ENCODE measurements at regions of chr13 and their contacts with region 1.

Region 1: GRCh38 chr13:99087096-99087953 is 109.5 kb upstream of the DOCK9 start:
- DNase-seq: peak; percentile 83 to 95 (median 92)
- ATAC-seq: peak; percentile 85
- H3K4me3 ChIP-seq: peak overlapping the region; percentile 97
- H3K4me3 Mint-ChIP-seq: peak overlapping the region; percentile 92 to 100 (median 98)
- H3K27ac ChIP-seq: peak overlapping the region; percentile 95
- H3K27ac Mint-ChIP-seq: peak overlapping the region; percentile 96 to 99 (median 98)
- H3K4me1 ChIP-seq: peaks cover 29 to 31% of the 10 kb centered on the region in 2 donors
- H3K4me1 Mint-ChIP-seq: peaks cover 26 to 53% (median 42%) of the 10 kb centered on the region in 7 donors
- H3K27me3 ChIP-seq: no peaks in the 10 kb centered on the region
- H3K27me3 Mint-ChIP-seq: peaks cover 0 to 5% (median 3%) of the 10 kb centered on the region in 5 donors

Region 2: GRCh38 chr13:97975848-97976609 is 1111.3 kb before region 1 on chr13:
- CTCF ChIA-PET with region 1: no interaction called
- POLR2A ChIA-PET with region 1: no interaction called
- intact Hi-C with region 1: loop called in 1 of 2 experiments (anchors 2 kb)
- DNase-seq: peak; percentile 53 to 94 (median 88)
- ATAC-seq: peak; percentile 97
- H3K4me3 ChIP-seq: peak overlapping the region; percentile 69
- H3K4me3 Mint-ChIP-seq: peak overlapping the region; percentile 88 to 100 (median 96)
- H3K27ac ChIP-seq: peak overlapping the region; percentile 88
- H3K27ac Mint-ChIP-seq: peak overlapping the region; percentile 90 to 98 (median 96)
- H3K4me1 ChIP-seq: peaks cover 12 to 15% of the 10 kb centered on the region in 2 donors
- H3K4me1 Mint-ChIP-seq: peaks cover 17 to 44% (median 38%) of the 10 kb centered on the region in 7 donors
- H3K27me3 ChIP-seq: no peaks in the 10 kb centered on the region
- H3K27me3 Mint-ChIP-seq: peaks cover 0 to 5% (median 0%) of the 10 kb centered on the region in 5 donors

Region 3: GRCh38 chr13:98997738-98998641 is 89.3 kb before region 1 on chr13:
- CTCF ChIA-PET with region 1: no interaction called
- POLR2A ChIA-PET with region 1: interaction called, 5 read pairs
- intact Hi-C with region 1: loop called in 1 of 2 experiments (anchors 2 kb)
- DNase-seq: no peak
- ATAC-seq: no peak
- H3K4me3 ChIP-seq: no peak overlapping the region
- H3K4me3 Mint-ChIP-seq: peak overlapping the region; percentile 46 to 84 (median 72)
- H3K27ac ChIP-seq: peak overlapping the region; percentile 90
- H3K27ac Mint-ChIP-seq: peak overlapping the region; percentile 44 to 99 (median 96)
- H3K4me1 ChIP-seq: peaks cover 33 to 89% of the 10 kb centered on the region in 2 donors
- H3K4me1 Mint-ChIP-seq: peaks cover 60 to 100% (median 99%) of the 10 kb centered on the region in 7 donors
- H3K27me3 ChIP-seq: no peaks in the 10 kb centered on the region
- H3K27me3 Mint-ChIP-seq: no peaks in the 10 kb centered on the region

Region 4: GRCh38 chr13:99067160-99067985 is 20.0 kb before region 1 on chr13:
- CTCF ChIA-PET with region 1: interaction called, 7 read pairs
- POLR2A ChIA-PET with region 1: interaction called, 28 read pairs
- intact Hi-C with region 1: loop called (anchors 2 kb)
- DNase-seq: no peak
- ATAC-seq: no peak
- H3K4me3 ChIP-seq: no peak overlapping the region
- H3K4me3 Mint-ChIP-seq: peak overlapping the region; percentile 33 to 81 (median 56)
- H3K27ac ChIP-seq: no peak overlapping the region
- H3K27ac Mint-ChIP-seq: peak overlapping the region; percentile 46 to 89 (median 76)
- H3K4me1 ChIP-seq: peaks cover 14 to 46% of the 10 kb centered on the region in 2 donors
- H3K4me1 Mint-ChIP-seq: peaks cover 44 to 98% (median 88%) of the 10 kb centered on the region in 7 donors
- H3K27me3 ChIP-seq: no peaks in the 10 kb centered on the region
- H3K27me3 Mint-ChIP-seq: peaks cover 0 to 13% (median 0%) of the 10 kb centered on the region in 5 donors

Region 5: GRCh38 chr13:99258210-99258860 is 171.0 kb after region 1 on chr13 and contains the start of gene GPR18:
- CTCF ChIA-PET with region 1: no interaction called
- POLR2A ChIA-PET with region 1: interaction called, 11 read pairs
- intact Hi-C with region 1: loop called (anchors 2 to 5 kb)
- DNase-seq: peak in 7 of 9 donors; percentile 56 to 81 (median 70)
- ATAC-seq: peak; percentile 89
- H3K4me3 ChIP-seq: peak within 1 kb of the TSS; percentile 86
- H3K4me3 Mint-ChIP-seq: peak within 1 kb of the TSS; percentile 86 to 99 (median 94)
- H3K27ac ChIP-seq: peak within 1 kb of the TSS; percentile 81
- H3K27ac Mint-ChIP-seq: peak within 1 kb of the TSS; percentile 90 to 97 (median 95)
- H3K4me1 ChIP-seq: peaks cover 27 to 40% of the 10 kb centered on the region in 2 donors
- H3K4me1 Mint-ChIP-seq: peaks cover 30 to 80% (median 66%) of the 10 kb centered on the region in 7 donors
- H3K27me3 ChIP-seq: no peaks in the 10 kb centered on the region
- H3K27me3 Mint-ChIP-seq: no peaks in the 10 kb centered on the region
- total RNA-seq, gene GPR18: 11.5 to 40.4 (median 21.1) TPM

Region 6: GRCh38 chr13:99436686-99437416 is 349.5 kb after region 1 on chr13:
- CTCF ChIA-PET with region 1: no interaction called
- POLR2A ChIA-PET with region 1: no interaction called
- intact Hi-C with region 1: loop called in 1 of 2 experiments (anchors 5 kb)
- DNase-seq: peak; percentile 92 to 98 (median 93)
- ATAC-seq: peak; percentile 69
- H3K4me3 ChIP-seq: peak overlapping the region; percentile 39
- H3K4me3 Mint-ChIP-seq: peak overlapping the region; percentile 17 to 79 (median 68)
- H3K27ac ChIP-seq: peak overlapping the region; percentile 83
- H3K27ac Mint-ChIP-seq: peak overlapping the region; percentile 67 to 99 (median 87)
- H3K4me1 ChIP-seq: peaks cover 43 to 48% of the 10 kb centered on the region in 2 donors
- H3K4me1 Mint-ChIP-seq: peaks cover 28 to 68% (median 59%) of the 10 kb centered on the region in 7 donors
- H3K27me3 ChIP-seq: no peaks in the 10 kb centered on the region
- H3K27me3 Mint-ChIP-seq: peaks cover 0 to 30% (median 0%) of the 10 kb centered on the region in 5 donors

Measured in naive thymus-derived CD4-positive, alpha-beta T cell (primary cell).